ENCODE measurements at regions of chr21 and their contacts with region 1.

Region 1: GRCh38 chr21:36156339-36156814 is 247 bp upstream of the DOP1B start:
- DNase-seq: peak; percentile 98 to 100 (median 100)
- ATAC-seq: peak; percentile 89
- H3K4me3 ChIP-seq: peak overlapping the region; percentile 76 to 78
- H3K4me3 Mint-ChIP-seq: peak overlapping the region; percentile 83
- H3K27ac ChIP-seq: peak overlapping the region; percentile 65 to 68
- H3K27ac Mint-ChIP-seq: peak overlapping the region; percentile 72
- H3K4me1 ChIP-seq: peaks cover 24% of the 10 kb centered on the region
- H3K4me1 Mint-ChIP-seq: peaks cover 33% of the 10 kb centered on the region
- H3K27me3 ChIP-seq: no peaks in the 10 kb centered on the region
- H3K27me3 Mint-ChIP-seq: no peaks in the 10 kb centered on the region
- CTCF ChIP-seq: no peak

Region 2: DNA sequence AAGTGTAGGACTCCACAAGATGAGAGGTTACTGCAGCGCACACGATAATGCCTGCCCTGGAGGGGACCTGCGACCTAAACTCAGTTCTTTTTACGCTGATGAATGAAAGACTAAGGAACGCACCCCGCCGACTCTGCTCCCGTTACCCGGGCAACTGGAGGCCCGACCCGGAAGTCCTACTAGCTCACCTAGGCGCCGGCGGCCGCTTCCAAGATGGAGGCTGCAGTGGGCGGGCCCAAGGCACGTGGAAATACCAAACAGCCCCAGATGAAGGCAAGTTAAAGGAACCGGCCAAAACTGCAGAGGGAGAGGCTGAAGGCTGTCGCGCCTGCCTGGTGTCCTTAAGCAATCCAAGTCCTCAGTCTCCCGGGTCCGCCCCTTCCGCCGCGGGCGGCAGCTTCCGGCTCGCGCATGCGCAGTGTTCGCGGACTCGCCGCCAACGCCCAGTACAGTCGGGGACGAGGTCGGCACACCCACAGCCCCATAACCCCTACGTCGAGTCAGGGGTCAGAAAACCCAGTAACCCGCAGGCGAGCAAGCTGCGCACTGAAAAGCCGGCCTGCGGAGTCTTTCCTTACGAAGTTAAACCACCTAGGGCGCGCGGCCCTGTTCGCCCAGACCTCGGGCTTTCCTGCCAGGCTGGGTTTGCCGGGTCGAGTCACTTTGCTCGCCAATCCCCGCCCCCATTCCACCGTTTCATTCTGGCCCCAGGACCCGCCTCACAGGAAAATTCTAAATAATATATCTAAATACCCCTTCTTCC is 96.0 kb before region 1 on chr21 and contains the start of gene SETD4:
- CTCF ChIA-PET with region 1: no interaction called
- POLR2A ChIA-PET with region 1: no interaction called
- intact Hi-C with region 1: loop called (anchors 1 kb)
- DNase-seq: peak; percentile 80 to 97 (median 92)
- ATAC-seq: peak; percentile 87
- H3K4me3 ChIP-seq: peak within 1 kb of the TSS; percentile 88 to 99
- H3K4me3 Mint-ChIP-seq: peak within 1 kb of the TSS; percentile 96
- H3K27ac ChIP-seq: peak within 1 kb of the TSS; percentile 69 to 90
- H3K27ac Mint-ChIP-seq: peak within 1 kb of the TSS; percentile 98
- H3K4me1 ChIP-seq: peaks cover 4% of the 10 kb centered on the region
- H3K4me1 Mint-ChIP-seq: peaks cover 27% of the 10 kb centered on the region
- H3K27me3 ChIP-seq: no peaks in the 10 kb centered on the region
- H3K27me3 Mint-ChIP-seq: no peaks in the 10 kb centered on the region
- CTCF ChIP-seq: no peak
- total RNA-seq, gene SETD4: 13.9 to 15.4 TPM

Region 3: DNA sequence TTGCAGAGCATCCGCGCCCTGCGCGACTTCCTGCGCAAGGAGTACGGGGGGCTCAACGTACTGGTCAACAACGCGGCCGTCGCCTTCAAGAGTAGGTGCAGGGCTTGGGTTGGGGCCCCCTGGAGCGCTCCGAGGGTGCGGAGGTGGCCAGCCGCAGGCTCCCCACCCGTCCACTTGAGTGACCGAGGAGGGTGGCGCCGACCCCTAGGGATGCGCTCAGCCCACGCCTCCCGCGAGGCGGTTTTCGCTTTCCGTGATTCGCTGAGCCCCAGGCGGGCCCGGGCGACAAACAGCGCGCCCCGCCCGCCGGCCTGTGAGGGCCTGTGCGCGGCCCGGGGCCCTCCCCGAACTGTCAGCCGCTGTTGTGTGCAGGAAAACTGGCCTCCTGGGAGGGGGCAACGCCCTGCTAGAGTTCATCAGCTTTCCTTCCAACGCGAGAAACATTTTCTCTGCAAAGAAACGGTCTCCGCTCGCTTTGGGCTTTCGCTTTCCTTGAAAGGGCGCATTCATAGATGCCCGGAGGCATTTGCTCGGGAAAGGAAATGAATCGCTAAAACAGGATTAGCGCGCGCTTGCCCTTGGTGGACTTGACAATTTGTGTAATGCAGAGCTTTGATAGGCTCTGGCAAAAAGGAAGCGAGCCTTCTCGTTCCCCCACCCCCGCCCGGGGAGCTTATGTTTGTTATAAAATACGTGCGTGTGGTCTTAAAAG is 20.8 kb before region 1 on chr21:
- CTCF ChIA-PET with region 1: interaction called, 98 read pairs
- POLR2A ChIA-PET with region 1: interaction called, 3 read pairs
- intact Hi-C with region 1: loop called (anchors 1 to 2 kb)
- DNase-seq: peak in 7 of 9 experiments; percentile 37 to 74 (median 56)
- ATAC-seq: peak; percentile 72
- H3K4me3 ChIP-seq: peak overlapping the region; percentile 68 to 77
- H3K4me3 Mint-ChIP-seq: peak overlapping the region; percentile 93
- H3K27ac ChIP-seq: peak overlapping the region; percentile 34 to 38
- H3K27ac Mint-ChIP-seq: peak overlapping the region; percentile 87
- H3K4me1 ChIP-seq: peaks cover 20% of the 10 kb centered on the region
- H3K4me1 Mint-ChIP-seq: peaks cover 19% of the 10 kb centered on the region
- H3K27me3 ChIP-seq: no peaks in the 10 kb centered on the region
- H3K27me3 Mint-ChIP-seq: no peaks in the 10 kb centered on the region
- CTCF ChIP-seq: no peak

Region 4: DNA sequence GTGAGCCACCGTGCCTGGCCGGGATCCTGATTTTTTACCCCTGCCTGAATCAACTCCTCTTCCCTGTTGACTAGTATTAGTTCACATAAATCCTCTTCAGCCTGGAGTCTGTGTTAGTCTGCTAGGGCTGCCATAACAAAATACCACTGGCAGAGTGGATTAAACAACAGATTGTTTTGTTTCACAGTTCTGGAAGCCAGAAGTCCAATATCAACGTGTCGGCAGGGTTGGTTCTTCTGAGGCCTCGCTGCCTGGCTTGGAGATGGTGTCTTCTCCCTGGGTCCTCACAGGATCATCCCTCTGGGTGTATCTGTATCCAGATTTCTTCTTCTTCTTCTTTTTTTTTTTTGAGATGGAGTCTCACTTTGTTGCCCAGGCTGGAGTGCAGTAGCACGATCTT is 18.4 kb after region 1 on chr21:
- CTCF ChIA-PET with region 1: interaction called, 13 read pairs
- POLR2A ChIA-PET with region 1: interaction called, 17 read pairs
- intact Hi-C with region 1: loop called (anchors 1 kb)
- DNase-seq: no peak
- ATAC-seq: no peak
- H3K4me3 ChIP-seq: no peak overlapping the region
- H3K4me3 Mint-ChIP-seq: no peak overlapping the region
- H3K27ac ChIP-seq: peak overlapping the region in 1 of 2 experiments; percentile 82
- H3K27ac Mint-ChIP-seq: peak overlapping the region; percentile 69
- H3K4me1 ChIP-seq: peaks cover 24% of the 10 kb centered on the region
- H3K4me1 Mint-ChIP-seq: peaks cover 17% of the 10 kb centered on the region
- H3K27me3 ChIP-seq: no peaks in the 10 kb centered on the region
- H3K27me3 Mint-ChIP-seq: no peaks in the 10 kb centered on the region
- CTCF ChIP-seq: no peak

Region 5: DNA sequence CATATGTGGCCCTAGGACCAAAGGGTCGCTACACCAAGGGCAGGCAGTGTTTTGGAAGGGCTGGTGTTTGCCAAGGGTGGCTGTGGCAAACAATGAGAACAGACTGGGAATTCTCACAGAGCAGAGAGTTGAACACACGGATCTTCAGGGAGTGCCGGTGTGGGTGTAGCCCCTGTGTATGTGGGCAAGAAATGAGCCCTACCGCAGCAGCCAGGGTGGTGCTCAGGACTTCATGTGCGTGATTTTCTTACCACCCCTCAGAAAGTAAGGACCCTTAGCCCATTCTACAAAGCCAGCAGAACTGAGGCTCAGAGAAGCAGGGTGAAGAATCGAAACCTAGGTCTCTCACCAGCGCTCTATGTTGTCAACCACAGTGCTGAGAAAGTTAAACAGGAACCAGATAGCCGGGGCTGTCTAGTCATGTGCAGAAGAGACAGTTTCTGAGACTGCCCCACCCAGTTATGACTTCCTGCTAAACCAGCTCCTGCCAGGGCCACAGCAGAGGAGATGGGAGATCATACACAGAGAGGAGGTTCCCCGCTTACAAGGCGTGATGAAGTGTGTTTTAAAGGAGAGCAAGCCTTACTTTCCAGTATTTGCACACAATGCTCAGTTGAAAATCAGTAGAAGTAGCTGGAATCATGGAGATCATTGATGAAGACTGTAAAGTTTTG is 141.7 kb after region 1 on chr21:
- CTCF ChIA-PET with region 1: no interaction called
- POLR2A ChIA-PET with region 1: no interaction called
- intact Hi-C with region 1: loop called in 1 of 2 experiments (anchors 1 kb)
- DNase-seq: peak; percentile 43 to 92 (median 79)
- ATAC-seq: peak; percentile 98
- H3K4me3 ChIP-seq: peak overlapping the region; percentile 43 to 47
- H3K4me3 Mint-ChIP-seq: peak overlapping the region; percentile 85
- H3K27ac ChIP-seq: peak overlapping the region; percentile 72 to 96
- H3K27ac Mint-ChIP-seq: peak overlapping the region; percentile 97
- H3K4me1 ChIP-seq: peaks cover 28% of the 10 kb centered on the region
- H3K4me1 Mint-ChIP-seq: peaks cover 37% of the 10 kb centered on the region
- H3K27me3 ChIP-seq: no peaks in the 10 kb centered on the region
- H3K27me3 Mint-ChIP-seq: no peaks in the 10 kb centered on the region
- CTCF ChIP-seq: no peak

Region 6: DNA sequence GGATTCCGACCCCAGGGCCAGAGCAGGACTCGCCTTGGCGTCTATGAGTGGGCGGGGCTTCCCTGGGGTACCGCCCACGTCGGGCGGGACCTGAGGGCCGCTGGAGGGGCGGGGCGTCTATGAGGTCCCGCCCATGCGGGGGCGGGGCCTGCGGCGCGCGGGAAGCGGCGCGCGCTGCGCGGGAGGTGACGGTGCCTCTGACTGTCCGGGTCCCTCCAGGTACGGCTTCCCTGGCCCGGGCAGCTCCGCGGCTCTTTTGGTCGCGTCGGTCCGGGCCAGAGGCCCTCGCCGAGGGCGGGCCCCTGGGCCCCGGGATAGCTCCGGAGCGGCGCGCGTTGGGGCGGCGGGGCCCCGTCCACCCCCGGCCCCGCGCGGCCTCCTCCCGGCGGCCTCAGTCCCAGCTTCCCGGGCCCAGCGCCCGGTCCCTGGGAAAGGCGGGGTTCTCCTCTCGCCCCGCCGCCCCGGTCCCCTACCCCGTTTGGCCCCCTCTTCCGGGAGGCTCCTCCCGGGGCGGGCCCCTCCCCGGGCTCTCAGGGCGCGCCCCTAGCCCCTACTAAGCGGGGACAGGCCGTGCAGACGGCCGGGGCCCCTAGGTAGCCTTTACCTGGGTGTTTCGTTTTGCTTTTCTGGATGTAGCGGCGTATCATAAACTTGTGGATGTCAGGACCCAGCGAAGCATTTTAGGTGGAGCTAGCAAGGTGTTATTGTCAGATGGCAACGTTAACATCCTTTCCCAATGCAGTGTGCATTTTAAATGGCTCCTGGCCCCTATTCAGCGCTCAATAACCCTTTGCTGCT is 229.1 kb after region 1 on chr21 and contains the start of gene CHAF1B:
- CTCF ChIA-PET with region 1: interaction called, 4 read pairs
- POLR2A ChIA-PET with region 1: no interaction called
- intact Hi-C with region 1: loop called (anchors 1 kb)
- DNase-seq: peak; percentile 62 to 88 (median 79)
- ATAC-seq: peak; percentile 98
- H3K4me3 ChIP-seq: peak within 1 kb of the TSS; percentile 63 to 66
- H3K4me3 Mint-ChIP-seq: peak within 1 kb of the TSS; percentile 86
- H3K27ac ChIP-seq: peak within 1 kb of the TSS in 1 of 2 experiments; percentile 37
- H3K27ac Mint-ChIP-seq: peak within 1 kb of the TSS; percentile 55
- H3K4me1 ChIP-seq: peaks cover 6% of the 10 kb centered on the region
- H3K4me1 Mint-ChIP-seq: peaks cover 7% of the 10 kb centered on the region
- H3K27me3 ChIP-seq: no peaks in the 10 kb centered on the region
- H3K27me3 Mint-ChIP-seq: no peaks in the 10 kb centered on the region
- CTCF ChIP-seq: no peak
- total RNA-seq, gene CHAF1B: 2.0 to 3.9 TPM

Region 7: DNA sequence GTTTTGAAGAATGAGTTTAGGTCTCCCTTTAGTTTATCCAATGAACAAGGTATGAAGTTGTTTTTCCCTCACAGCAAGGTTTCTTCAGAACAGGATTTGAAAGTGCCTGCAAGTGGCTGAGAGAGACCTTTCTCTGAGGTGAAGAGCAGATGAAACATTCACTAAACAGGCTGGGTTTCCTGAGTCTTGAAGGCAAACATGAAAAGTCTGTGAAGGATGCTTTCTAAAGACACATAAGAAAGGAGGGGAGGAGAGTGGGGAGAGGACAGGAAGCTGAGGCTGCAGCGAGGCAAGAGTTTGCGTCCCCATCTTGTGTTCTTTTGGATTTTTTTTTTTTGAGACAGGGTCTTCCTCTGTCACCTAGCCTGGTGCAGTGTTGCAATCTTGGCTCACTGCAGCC is 446.8 kb after region 1 on chr21:
- CTCF ChIA-PET with region 1: no interaction called
- POLR2A ChIA-PET with region 1: no interaction called
- intact Hi-C with region 1: no loop called
- DNase-seq: peak in 3 of 9 experiments; percentile 40 to 69 (median 44)
- ATAC-seq: peak; percentile 93
- H3K4me3 ChIP-seq: no peak overlapping the region
- H3K4me3 Mint-ChIP-seq: peak overlapping the region; percentile 23
- H3K27ac ChIP-seq: peak overlapping the region in 1 of 2 experiments; percentile 33
- H3K27ac Mint-ChIP-seq: peak overlapping the region; percentile 90
- H3K4me1 ChIP-seq: peaks cover 17% of the 10 kb centered on the region
- H3K4me1 Mint-ChIP-seq: peaks cover 19% of the 10 kb centered on the region
- H3K27me3 ChIP-seq: peaks cover 0 to under 1% of the 10 kb centered on the region in 2 experiments
- H3K27me3 Mint-ChIP-seq: peaks cover 4% of the 10 kb centered on the region
- CTCF ChIP-seq: no peak

Measured in CD8-positive, alpha-beta T cell (primary cell).